ACHN (cell line): ENCODE measurements at regions of chr10 and their contacts with region 1.

Region 1: GRCh38 chr10:99620713-99621453 is 644 bp upstream of the SLC25A28 start:
- DNase-seq: peak; percentile 94

Region 2: GRCh38 chr10:99403674-99404073 is 217.2 kb before region 1 on chr10:
- in situ Hi-C with region 1: no loop called
- DNase-seq: no peak

Region 3: DNA sequence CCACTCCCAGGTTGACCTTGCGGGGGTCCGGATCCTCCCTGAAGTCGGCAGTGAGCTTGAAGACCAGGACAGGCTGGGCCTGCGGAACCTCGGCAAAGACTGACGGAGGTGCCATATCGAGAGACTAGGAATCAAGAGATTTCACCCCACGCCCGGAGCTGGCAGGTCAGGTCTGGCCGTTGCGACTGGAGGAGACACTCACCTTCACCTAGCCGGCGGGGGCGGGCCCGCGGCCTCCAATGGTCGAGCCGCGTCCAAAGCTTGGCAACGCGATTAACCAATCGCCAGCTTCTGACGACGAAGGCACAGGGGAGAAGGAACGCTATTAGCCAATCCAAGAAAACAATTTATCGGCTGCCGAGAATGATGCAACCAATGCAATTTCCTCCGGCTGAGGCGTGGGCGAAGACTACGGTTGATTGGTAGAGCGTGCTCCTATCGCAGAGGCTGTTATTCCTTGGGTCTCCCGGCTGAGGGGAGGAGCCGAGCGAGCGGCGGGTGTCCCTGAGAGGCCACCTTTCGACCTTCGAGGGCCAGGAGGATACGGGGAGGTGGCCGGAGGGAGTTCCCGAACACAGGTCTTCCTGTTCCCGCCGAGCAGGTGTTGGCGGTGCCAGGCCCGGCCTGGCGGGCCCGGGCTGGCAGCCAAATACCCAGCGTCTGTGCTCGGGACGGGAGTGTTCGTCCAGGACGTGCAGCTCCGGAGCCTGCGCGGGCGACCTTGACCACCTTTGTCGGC is 190.3 kb before region 1 on chr10 and contains the start of gene GOT1:
- in situ Hi-C with region 1: loop called (anchors 25 kb)
- DNase-seq: peak; percentile 100

Region 4: GRCh38 chr10:99983280-99983988 is 362.6 kb after region 1 on chr10:
- in situ Hi-C with region 1: no loop called
- DNase-seq: no peak